Endothelial cell of umbilical vein (primary cell): ENCODE measurements at regions of chr9 and their contacts with region 1.

Region 1: GRCh38 chr9:128296337-128297220 is 20.5 kb downstream of the SWI5 start:
- DNase-seq: no peak
- H3K4me3 ChIP-seq: no peak overlapping the region
- H3K27ac ChIP-seq: no peak overlapping the region
- H3K4me1 ChIP-seq: peaks cover 6% of the 10 kb centered on the region
- H3K27me3 ChIP-seq: no peaks in the 10 kb centered on the region
- CTCF ChIP-seq: no peak
- POLR2A ChIP-seq: no peak

Region 2: DNA sequence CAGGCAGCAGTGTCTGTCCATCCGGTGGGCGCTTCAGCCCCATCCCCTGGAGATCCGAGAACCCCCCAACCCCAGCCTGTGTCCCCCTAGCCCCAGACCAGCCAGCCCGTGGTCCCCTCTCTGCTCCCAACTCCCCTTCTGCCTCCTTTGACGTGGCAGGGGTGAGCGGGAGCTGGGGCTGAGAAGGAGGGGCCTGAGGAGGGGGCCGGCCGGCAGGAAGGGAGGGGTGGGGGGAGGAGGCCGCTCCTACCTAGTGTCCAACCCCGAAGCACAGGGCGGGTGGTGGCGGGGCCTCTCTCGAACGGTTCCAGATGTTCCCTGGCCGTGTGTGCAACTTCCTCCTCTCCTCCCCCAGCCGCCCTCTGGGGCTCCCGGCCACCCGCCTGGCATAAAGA is 51.7 kb before region 1 on chr9:
- CTCF ChIA-PET with region 1: no interaction called
- POLR2A ChIA-PET with region 1: no interaction called
- dilution Hi-C with region 1: no loop called
- intact Hi-C with region 1: no loop called
- DNase-seq: no peak
- H3K4me3 ChIP-seq: no peak overlapping the region
- H3K27ac ChIP-seq: no peak overlapping the region
- H3K4me1 ChIP-seq: peaks cover 13% of the 10 kb centered on the region
- H3K27me3 ChIP-seq: no peaks in the 10 kb centered on the region
- CTCF ChIP-seq: no peak
- POLR2A ChIP-seq: no peak

Region 3: DNA sequence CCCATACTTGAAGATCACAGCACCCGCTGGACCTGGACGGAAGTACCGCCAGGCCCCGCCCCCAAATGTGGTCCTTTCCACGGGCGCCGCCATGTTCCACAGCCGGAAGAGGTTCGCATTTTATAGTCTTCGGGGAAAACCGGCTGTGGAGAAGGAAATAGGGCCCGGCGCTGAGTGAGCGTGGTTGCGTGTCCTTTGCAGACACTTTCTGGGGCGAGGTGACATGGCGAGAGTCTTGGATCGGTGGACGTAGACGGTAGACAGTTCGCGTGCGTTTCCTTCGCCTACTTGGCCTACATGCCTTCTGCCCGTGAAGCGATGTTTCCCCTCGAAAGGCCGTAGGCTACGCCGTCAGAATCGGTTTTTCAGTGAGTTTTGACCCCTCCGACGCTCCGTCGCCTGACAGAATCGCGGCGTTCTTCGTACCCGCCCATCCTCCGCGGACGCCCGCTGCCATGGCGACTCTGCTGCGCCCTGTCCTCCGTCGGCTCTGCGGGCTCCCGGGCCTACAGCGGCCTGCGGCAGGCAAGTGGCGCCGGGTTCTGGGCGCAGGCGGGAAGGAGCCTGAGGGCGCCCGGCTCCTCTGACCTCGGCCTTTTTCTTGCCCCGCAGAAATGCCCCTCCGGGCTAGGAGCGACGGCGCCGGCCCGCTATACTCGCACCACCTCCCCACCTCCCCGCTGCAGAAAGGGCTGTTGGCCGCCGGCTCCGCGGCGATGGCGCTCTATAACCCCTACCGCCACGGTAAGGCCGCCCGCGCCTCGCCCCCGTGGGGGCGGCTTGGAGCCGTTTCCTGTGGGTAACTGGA is 26.0 kb after region 1 on chr9 and contains the starts of genes COQ4 and TRUB2:
- CTCF ChIA-PET with region 1: interaction called, 4 read pairs
- POLR2A ChIA-PET with region 1: no interaction called
- dilution Hi-C with region 1: no loop called
- intact Hi-C with region 1: loop called (anchors 1 kb)
- DNase-seq: peak; percentile 95
- H3K4me3 ChIP-seq: peak within 1 kb of the TSS; percentile 83 to 92 (median 83)
- H3K27ac ChIP-seq: peak within 1 kb of the TSS; percentile 56
- H3K4me1 ChIP-seq: peaks cover 12% of the 10 kb centered on the region
- H3K27me3 ChIP-seq: no peaks in the 10 kb centered on the region
- CTCF ChIP-seq: no peak
- POLR2A ChIP-seq: peak; percentile 72
- total RNA-seq, gene COQ4: 44.4 and 46.6 TPM in 2 replicates
- total RNA-seq, gene TRUB2: 35.4 and 39.3 TPM in 2 replicates

Region 4: DNA sequence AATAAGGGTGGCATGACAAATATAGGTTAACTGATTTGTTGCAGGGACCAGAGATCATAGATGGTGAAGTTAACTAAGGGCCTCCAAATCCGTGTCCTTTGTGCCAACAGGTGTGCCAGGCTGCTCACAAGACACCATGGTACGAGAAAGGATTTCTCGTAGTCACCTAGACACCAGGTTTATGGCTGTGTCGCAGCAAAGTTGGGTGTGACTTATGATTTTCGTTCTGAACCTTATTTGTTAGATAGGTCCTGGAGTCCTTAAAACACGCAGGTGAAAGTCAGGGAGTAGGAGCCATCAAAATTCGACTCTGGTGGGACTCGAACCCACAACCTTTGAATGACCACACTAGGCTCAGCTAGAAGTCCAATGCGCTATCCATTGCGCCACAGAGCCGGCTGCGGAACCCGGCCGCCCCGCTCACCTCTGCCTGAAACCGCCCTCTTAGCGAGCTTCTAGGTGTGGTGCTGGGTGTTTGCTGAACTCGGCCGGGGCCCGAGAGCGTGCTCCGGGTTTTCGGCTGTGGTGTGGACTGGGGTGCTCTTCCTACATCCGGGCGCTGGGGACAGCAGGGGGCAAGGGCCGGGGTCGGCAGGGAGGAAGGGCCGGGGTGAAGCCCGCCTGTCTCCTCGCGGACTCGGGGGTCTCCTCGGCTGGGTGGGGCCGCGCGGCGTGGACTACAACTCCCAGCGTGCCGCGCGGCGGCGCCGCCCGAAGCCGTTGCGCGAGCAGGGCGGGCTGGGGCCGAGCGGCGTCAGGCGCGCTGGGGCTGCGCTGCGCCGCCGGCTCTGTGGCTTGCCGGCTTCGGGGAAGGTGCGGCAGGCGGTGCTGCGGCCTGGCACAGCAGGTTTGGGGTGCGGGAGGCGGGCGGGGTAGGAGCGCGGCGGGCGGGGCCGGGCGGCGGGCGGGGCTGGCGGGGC is 43.5 kb after region 1 on chr9 and contains the start of gene SLC27A4:
- CTCF ChIA-PET with region 1: interaction called, 48 read pairs
- POLR2A ChIA-PET with region 1: no interaction called
- dilution Hi-C with region 1: no loop called
- intact Hi-C with region 1: loop called (anchors 1 kb)
- DNase-seq: peak; percentile 68
- H3K4me3 ChIP-seq: peak within 1 kb of the TSS; percentile 57 to 79 (median 78)
- H3K27ac ChIP-seq: no peak within 1 kb of the TSS
- H3K4me1 ChIP-seq: peaks cover 7% of the 10 kb centered on the region
- H3K27me3 ChIP-seq: no peaks in the 10 kb centered on the region
- CTCF ChIP-seq: no peak
- POLR2A ChIP-seq: peak; percentile 75
- total RNA-seq, gene SLC27A4: 35.0 and 36.9 TPM in 2 replicates

Region 5: GRCh38 chr9:128412120-128412790 is 115.7 kb after region 1 on chr9:
- CTCF ChIA-PET with region 1: interaction called, 15 read pairs
- POLR2A ChIA-PET with region 1: no interaction called
- dilution Hi-C with region 1: no loop called
- intact Hi-C with region 1: loop called (anchors 1 kb)
- DNase-seq: peak; percentile 76
- H3K4me3 ChIP-seq: no peak overlapping the region
- H3K27ac ChIP-seq: no peak overlapping the region
- H3K4me1 ChIP-seq: no peaks in the 10 kb centered on the region
- H3K27me3 ChIP-seq: peaks cover 9% of the 10 kb centered on the region in 2 experiments
- CTCF ChIP-seq: peak; percentile 54 to 84
- POLR2A ChIP-seq: no peak